Heart left ventricle (tissue), 16 donors: ENCODE measurements at regions of chrX and their contacts with region 1.

Region 1: GRCh38 chrX:37509349-37509748 is 62.1 kb upstream of the LANCL3 start:
- DNase-seq: no peak
- ATAC-seq: peak in 1 of 4 donors; percentile 36
- H3K4me3 ChIP-seq: no peak overlapping the region
- H3K27ac ChIP-seq: no peak overlapping the region
- H3K4me1 ChIP-seq: no peaks in the 10 kb centered on the region
- H3K27me3 ChIP-seq: peaks cover 0 to 5% (median 0%) of the 10 kb centered on the region in 9 donors
- CTCF ChIP-seq: peak in 10 of 12 donors; percentile 10 to 44 (median 26)
- POLR2A ChIP-seq: no peak

Region 2: GRCh38 chrX:37825209-37825842 is 316.0 kb after region 1 on chrX:
- intact Hi-C with region 1: loop called (anchors 1 to 10 kb)
- DNase-seq: peak in 1 of 5 donors; percentile 26
- ATAC-seq: no peak
- H3K4me3 ChIP-seq: no peak overlapping the region
- H3K27ac ChIP-seq: no peak overlapping the region
- H3K4me1 ChIP-seq: peaks cover 0 to 7% (median 0%) of the 10 kb centered on the region in 12 donors
- H3K27me3 ChIP-seq: peaks cover 0 to 4% (median 0%) of the 10 kb centered on the region in 9 donors
- CTCF ChIP-seq: peak; percentile 68 to 88 (median 74)
- POLR2A ChIP-seq: no peak